ENCODE measurements at regions of chr5 and their contacts with region 1.

Region 1: GRCh38 chr5:113378959-113379541 is 55.7 kb downstream of the TSSK1B start:
- DNase-seq: peak; percentile 20
- H3K4me3 ChIP-seq: no peak overlapping the region
- H3K27ac ChIP-seq: no peak overlapping the region
- H3K27me3 ChIP-seq: peaks cover 3% of the 10 kb centered on the region
- CTCF ChIP-seq: peak; percentile 74

Region 2: GRCh38 chr5:113271015-113271414 is 108.0 kb before region 1 on chr5:
- CTCF ChIA-PET with region 1: no interaction called
- POLR2A ChIA-PET with region 1: no interaction called
- DNase-seq: no peak
- H3K4me3 ChIP-seq: no peak overlapping the region
- H3K27ac ChIP-seq: no peak overlapping the region
- H3K27me3 ChIP-seq: no peaks in the 10 kb centered on the region
- CTCF ChIP-seq: no peak

Region 3: DNA sequence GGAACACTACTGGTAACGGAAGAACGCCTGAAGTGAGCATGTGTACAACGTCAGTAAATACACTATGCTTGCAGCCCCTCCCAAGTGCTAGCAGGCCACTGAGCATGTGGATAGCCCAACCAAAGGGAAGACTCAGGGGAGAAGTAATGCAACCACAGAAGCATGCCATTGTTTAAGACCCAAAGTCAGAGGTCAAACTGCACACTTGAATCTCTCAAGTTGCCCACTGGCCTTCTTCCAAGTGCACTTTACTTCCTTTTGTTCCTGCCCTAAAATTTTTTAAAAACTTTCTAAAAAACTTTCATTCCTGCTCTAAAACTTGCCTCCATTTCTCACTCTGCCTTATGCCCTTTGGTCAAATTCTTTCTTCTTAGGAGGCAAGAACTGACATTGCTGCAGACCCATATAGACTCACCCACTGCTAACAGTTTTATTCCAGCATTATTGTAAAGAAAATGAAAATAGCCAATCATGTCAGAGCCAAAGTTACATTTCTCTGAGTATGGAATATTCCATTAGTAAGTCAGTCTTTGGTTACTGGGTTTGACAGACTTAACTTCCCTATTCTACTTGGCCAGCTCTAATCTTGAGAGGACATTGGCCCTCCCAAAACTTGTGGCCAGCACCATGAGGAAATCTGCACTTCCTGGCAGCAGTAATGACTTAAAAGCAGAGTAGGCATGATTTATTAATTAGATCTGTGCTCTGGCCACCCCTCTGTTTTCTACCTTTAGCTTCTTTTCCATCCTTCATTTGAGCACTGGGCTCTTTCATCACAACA is 21.2 kb before region 1 on chr5:
- CTCF ChIA-PET with region 1: interaction called, 11 read pairs
- POLR2A ChIA-PET with region 1: no interaction called
- DNase-seq: no peak
- H3K4me3 ChIP-seq: no peak overlapping the region
- H3K27ac ChIP-seq: no peak overlapping the region
- H3K27me3 ChIP-seq: no peaks in the 10 kb centered on the region
- CTCF ChIP-seq: no peak

Region 4: GRCh38 chr5:113552137-113552536 is 173.1 kb after region 1 on chr5:
- CTCF ChIA-PET with region 1: no interaction called
- POLR2A ChIA-PET with region 1: no interaction called
- DNase-seq: no peak
- H3K4me3 ChIP-seq: no peak overlapping the region
- H3K27ac ChIP-seq: no peak overlapping the region
- H3K27me3 ChIP-seq: no peaks in the 10 kb centered on the region
- CTCF ChIP-seq: no peak

Region 5: GRCh38 chr5:113606298-113607134 is 227.5 kb after region 1 on chr5:
- CTCF ChIA-PET with region 1: interaction called, 24 read pairs
- POLR2A ChIA-PET with region 1: no interaction called
- DNase-seq: peak; percentile 18
- H3K4me3 ChIP-seq: no peak overlapping the region
- H3K27ac ChIP-seq: no peak overlapping the region
- H3K27me3 ChIP-seq: no peaks in the 10 kb centered on the region
- CTCF ChIP-seq: peak; percentile 82